ENCODE measurements at regions of chr9 and their contacts with region 1.

Region 1: GRCh38 chr9:124420991-124421543 is 5.8 kb upstream of the PSMB7 start:
- DNase-seq: no peak
- H3K4me3 ChIP-seq: no peak overlapping the region
- H3K27ac ChIP-seq: peak overlapping the region in 1 of 8 donors; percentile 48
- H3K4me1 ChIP-seq: peaks cover 3 to 20% (median 15%) of the 10 kb centered on the region in 6 donors
- H3K27me3 ChIP-seq: no peaks in the 10 kb centered on the region
- CTCF ChIP-seq: no peak
- POLR2A ChIP-seq: no peak

Region 2: DNA sequence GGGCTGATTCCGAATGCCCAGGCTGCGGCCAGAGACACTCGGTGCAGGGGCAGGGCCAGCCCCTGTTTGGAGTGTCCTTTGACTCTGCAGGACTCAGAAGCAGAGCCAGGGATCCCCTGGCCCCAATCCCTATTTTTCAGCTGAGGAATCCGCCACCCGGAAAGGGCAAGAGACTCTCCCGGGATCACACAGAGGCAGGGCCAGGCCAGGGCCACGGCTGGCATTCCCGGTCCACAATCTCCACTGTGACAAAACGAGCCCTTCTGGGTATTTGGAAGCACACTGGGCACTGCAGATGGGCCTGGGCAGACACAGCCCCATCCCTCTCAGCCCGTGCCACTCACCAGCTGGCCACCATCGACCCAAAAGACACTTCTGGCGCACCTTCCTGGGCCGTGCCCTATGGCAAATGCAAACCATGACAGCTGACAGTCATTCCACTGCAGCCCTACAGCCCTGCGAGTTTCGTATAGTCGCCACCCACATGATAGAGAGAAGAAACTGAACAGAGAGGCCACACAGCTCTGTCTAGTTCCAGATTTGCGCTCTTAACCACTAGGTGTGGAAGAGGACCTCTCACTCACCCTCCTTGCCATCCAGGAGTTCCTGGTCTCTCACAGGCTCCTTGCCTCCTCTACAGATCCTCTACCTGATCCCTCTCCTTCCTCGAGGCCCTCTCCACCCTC is 72.9 kb after region 1 on chr9:
- intact Hi-C with region 1: loop called (anchors 10 kb)
- DNase-seq: no peak
- H3K4me3 ChIP-seq: peak overlapping the region in 1 of 8 donors; percentile 76
- H3K27ac ChIP-seq: peak overlapping the region in 5 of 8 donors; percentile 70 to 89 (median 81)
- H3K4me1 ChIP-seq: peaks cover 2 to 91% (median 50%) of the 10 kb centered on the region in 6 donors
- H3K27me3 ChIP-seq: peaks cover 0 to 24% (median 0%) of the 10 kb centered on the region in 7 donors
- CTCF ChIP-seq: no peak
- POLR2A ChIP-seq: no peak

Region 3: DNA sequence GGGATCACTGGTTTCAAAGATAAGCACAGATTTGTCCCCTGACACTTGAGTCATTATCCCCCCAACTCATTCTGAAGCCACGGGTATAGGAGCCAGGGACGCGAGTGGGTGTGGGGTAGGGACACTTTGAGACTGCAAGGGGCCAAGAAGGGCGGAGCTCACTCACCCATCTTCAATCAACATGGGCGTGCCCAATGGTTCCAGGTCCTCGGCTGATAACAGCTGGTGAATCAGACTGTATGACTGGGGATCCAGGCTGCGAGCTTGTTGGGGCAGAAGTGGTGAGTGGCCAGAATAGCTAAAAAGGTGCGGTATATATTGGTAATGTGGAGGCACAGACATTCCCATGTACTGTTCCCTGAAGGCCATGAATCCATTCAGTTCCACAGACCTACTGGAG is 116.9 kb after region 1 on chr9:
- intact Hi-C with region 1: loop called (anchors 5 kb)
- DNase-seq: no peak
- H3K4me3 ChIP-seq: no peak overlapping the region
- H3K27ac ChIP-seq: no peak overlapping the region
- H3K4me1 ChIP-seq: peaks cover 0 to 14% (median 7%) of the 10 kb centered on the region in 6 donors
- H3K27me3 ChIP-seq: no peaks in the 10 kb centered on the region
- CTCF ChIP-seq: no peak
- POLR2A ChIP-seq: no peak

Region 4: DNA sequence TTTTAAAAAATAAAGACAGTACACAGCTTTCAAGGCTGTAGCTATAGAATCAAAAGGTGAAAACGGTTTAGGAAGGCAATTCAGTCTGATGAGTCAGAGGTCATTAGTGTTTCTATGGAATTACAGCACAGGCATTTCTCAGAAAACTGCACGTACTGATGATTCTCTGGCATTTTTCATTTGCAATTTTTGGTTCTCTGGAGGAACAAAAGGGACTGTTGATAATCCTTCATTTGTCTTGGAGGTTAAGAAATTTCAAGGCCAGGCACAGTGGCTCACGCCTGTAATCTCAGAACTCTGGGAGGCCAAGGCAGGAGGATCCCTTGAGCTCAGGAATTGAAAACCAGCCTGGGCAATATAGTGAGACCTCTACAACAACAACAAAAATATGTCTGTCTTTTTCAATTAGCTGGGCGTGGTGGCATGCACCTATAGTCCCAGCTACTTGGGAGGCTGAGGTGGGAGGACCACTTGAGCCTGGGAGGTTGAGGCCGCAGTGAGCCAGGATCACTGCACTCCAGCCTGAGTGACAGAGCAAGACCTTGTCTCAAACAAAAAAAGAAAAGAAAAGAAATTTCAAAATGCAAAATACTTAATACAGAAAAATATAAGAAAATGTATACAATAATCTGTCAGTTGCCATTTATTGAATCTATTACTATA is 322.8 kb after region 1 on chr9:
- intact Hi-C with region 1: no loop called
- DNase-seq: no peak
- H3K4me3 ChIP-seq: no peak overlapping the region
- H3K27ac ChIP-seq: no peak overlapping the region
- H3K4me1 ChIP-seq: no peaks in the 10 kb centered on the region
- H3K27me3 ChIP-seq: no peaks in the 10 kb centered on the region
- CTCF ChIP-seq: no peak
- POLR2A ChIP-seq: no peak